ENCODE measurements at regions of chr13 and their contacts with region 1.

Region 1: DNA sequence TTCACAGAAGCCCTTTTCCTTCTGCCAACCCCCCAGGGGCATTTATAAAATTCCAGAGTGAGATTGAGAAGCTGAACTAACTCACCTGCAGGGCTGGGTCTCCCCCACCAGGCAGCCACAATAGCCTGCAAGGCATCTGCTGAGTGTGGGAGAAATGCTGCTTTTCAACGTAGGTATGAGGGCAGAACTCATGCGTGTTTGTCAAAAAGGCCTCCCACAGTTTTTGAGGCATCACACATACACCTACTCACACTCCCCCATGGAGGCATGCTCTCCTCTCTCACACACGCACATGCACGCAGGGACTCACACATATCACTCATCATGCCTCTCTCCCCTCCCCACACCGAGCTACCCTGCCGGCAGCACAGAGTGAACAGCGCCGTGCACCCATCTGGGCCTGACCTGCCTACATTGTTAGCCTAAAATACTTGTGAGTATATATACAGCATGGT is 390.5 kb downstream of the FGF9 start:
- DNase-seq: peak; percentile 28
- H3K4me3 Mint-ChIP-seq: peak overlapping the region; percentile 53
- H3K27ac Mint-ChIP-seq: peak overlapping the region; percentile 83
- H3K4me1 Mint-ChIP-seq: peaks cover 65% of the 10 kb centered on the region
- H3K27me3 Mint-ChIP-seq: no peaks in the 10 kb centered on the region

Region 2: DNA sequence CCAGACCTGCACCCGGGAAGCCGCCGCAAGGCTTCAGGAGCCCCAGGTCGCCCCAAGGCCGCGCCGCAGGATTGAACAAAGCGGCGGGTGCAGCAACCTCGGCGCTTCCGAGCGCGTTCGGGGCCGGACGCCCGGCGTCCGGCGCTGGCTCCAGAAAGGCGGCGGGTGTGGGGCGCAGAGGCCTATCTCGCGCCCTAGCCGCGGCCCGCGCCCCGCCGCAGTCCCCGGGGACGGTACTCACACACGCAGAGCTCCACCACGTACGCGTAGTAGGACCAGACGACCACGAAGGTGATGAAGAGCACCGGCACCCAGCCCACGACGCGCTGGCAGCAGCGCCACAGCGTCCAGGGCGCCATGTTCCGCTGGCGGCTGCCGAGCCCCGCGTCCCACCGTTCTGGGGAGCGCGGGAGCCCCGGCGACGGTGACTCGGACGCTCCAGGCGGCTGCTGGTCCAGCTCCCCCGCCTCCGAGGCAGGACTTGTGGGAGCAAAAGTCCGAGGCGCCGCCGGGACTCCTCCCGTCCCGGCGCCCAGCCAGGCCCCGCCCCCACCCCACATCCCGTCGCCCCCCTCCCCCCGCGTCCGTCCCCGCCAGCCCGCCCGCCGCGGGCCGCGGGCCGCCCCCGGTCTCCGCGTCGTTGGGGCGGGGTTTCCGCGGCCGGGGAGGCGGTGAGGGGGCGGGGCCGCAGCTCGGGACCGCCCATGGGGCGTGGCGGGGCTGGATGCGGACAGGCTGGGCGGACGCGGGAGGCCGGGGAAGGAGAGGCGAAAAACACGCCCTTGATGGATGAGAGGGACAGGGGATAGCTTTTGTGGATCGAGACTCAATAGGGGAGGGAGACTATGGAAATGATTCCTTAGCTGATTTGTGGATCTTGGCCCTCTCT is 602.3 kb before region 1 on chr13 and contains the start of gene ZDHHC20:
- intact Hi-C with region 1: no loop called
- DNase-seq: peak; percentile 86
- H3K4me3 Mint-ChIP-seq: peak within 1 kb of the TSS; percentile 94
- H3K27ac Mint-ChIP-seq: peak within 1 kb of the TSS; percentile 94
- H3K4me1 Mint-ChIP-seq: peaks cover 32% of the 10 kb centered on the region
- H3K27me3 Mint-ChIP-seq: no peaks in the 10 kb centered on the region
- total RNA-seq, gene ZDHHC20: 61.2 and 66.4 TPM in 2 replicates

Region 3: GRCh38 chr13:21638319-21639282 is 422.8 kb before region 1 on chr13:
- intact Hi-C with region 1: loop called (anchors 10 kb)
- DNase-seq: no peak
- H3K4me3 Mint-ChIP-seq: no peak overlapping the region
- H3K27ac Mint-ChIP-seq: no peak overlapping the region
- H3K4me1 Mint-ChIP-seq: no peaks in the 10 kb centered on the region
- H3K27me3 Mint-ChIP-seq: peaks cover 7% of the 10 kb centered on the region

Region 4: DNA sequence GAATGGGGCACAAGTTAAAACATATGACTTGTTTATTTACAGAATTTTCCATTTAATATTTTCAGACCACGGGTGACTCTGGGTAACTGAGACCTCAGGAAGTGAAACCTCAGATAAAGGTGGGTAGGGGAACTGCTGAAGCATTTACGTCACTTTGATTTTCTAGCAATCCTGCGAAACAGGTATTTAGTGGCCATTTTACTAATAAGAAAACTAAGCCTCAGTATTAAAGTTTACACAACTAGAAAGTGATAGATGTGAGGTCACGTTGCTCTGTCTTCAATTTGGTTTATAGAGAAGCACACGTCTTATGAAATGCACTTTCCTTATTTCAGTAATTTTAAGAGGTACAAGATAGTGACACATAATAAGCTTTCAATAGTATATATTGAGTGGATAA is 12.3 kb after region 1 on chr13:
- intact Hi-C with region 1: loop called (anchors 1 kb)
- DNase-seq: no peak
- H3K4me3 Mint-ChIP-seq: no peak overlapping the region
- H3K27ac Mint-ChIP-seq: peak overlapping the region; percentile 79
- H3K4me1 Mint-ChIP-seq: peaks cover 54% of the 10 kb centered on the region
- H3K27me3 Mint-ChIP-seq: no peaks in the 10 kb centered on the region

Region 5: GRCh38 chr13:22161871-22162270 is 100.5 kb after region 1 on chr13:
- intact Hi-C with region 1: loop called (anchors 5 kb)
- DNase-seq: no peak
- H3K4me3 Mint-ChIP-seq: no peak overlapping the region
- H3K27ac Mint-ChIP-seq: no peak overlapping the region
- H3K4me1 Mint-ChIP-seq: peaks cover 19% of the 10 kb centered on the region
- H3K27me3 Mint-ChIP-seq: peaks cover 1% of the 10 kb centered on the region

Region 6: GRCh38 chr13:22176968-22177520 is 115.7 kb after region 1 on chr13:
- intact Hi-C with region 1: no loop called
- DNase-seq: no peak
- H3K4me3 Mint-ChIP-seq: no peak overlapping the region
- H3K27ac Mint-ChIP-seq: no peak overlapping the region
- H3K4me1 Mint-ChIP-seq: no peaks in the 10 kb centered on the region
- H3K27me3 Mint-ChIP-seq: no peaks in the 10 kb centered on the region

Region 7: DNA sequence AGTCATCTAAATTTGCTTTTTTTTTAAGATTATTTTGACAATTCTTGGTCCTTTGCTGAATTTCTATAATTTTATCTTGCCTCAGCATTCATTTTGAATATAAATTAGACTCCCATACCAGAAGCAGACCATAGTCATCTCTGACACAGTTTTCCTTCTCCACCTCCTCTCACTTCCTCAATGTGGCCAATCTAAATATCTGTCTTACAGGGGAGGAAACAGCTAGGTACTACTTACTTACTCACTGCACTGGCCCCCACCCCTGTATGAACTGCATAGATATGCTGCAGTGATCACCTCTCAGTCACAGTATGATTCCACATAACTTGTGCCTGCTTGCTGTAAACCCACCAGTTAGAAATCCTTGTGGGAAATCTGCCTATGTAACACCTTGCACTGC is 275.1 kb after region 1 on chr13:
- intact Hi-C with region 1: no loop called
- DNase-seq: no peak
- H3K4me3 Mint-ChIP-seq: no peak overlapping the region
- H3K27ac Mint-ChIP-seq: no peak overlapping the region
- H3K4me1 Mint-ChIP-seq: no peaks in the 10 kb centered on the region
- H3K27me3 Mint-ChIP-seq: no peaks in the 10 kb centered on the region